Activated CD8-positive, alpha-beta T cell treated with anti-CD3 and anti-CD28 coated beads for 36 hours (primary cell): ENCODE measurements at regions of chr12 and their contacts with region 1.

Region 1: DNA sequence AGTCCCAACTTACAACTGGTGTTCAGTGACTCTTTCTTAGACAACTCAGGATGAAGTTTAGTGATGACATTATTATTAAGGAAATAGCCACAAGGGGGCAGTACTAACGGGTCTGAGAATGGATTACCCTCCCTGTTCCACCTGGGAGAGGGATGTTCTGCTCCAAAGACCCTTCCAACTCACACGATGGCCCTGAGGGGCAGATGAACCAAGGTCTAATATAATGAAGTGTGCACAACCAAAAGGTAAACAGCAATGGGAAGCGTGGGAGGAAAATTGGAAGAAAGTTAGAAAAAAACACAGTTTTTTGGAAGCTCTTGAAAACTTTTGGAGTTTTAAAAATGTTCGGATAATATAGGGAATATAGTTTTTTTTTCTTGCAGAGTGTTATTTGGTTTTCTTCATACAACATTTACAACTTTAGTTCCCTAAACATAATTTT is 24.0 kb downstream of the FGF6 start:
- DNase-seq: peak; percentile 28
- ATAC-seq: no peak
- H3K4me3 Mint-ChIP-seq: no peak overlapping the region
- H3K27ac Mint-ChIP-seq: no peak overlapping the region
- H3K4me1 Mint-ChIP-seq: no peaks in the 10 kb centered on the region
- H3K27me3 Mint-ChIP-seq: peaks cover 5% of the 10 kb centered on the region
- CTCF ChIP-seq: peak; percentile 89

Region 2: DNA sequence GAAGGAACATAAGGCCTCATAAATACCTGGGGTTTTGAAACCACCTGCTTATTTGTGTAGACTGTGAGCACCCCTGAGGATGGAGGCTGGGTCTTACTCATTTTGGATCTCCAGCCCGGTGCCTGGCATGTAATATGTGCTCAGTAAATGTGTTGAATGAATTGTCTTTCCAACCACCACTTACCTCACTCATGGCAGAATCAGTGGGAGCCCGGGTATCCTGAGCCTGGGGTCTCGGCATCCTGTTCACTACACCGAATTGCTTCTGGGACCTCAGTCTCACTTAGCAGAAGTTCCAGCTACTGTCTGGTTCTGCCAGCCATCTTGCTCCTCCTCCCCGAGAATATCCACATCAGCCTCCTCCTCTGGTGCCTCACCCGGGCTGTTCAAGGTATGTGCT is 191.1 kb before region 1 on chr12:
- CTCF ChIA-PET with region 1: no interaction called
- POLR2A ChIA-PET with region 1: no interaction called
- intact Hi-C with region 1: no loop called
- DNase-seq: no peak
- ATAC-seq: no peak
- H3K4me3 Mint-ChIP-seq: no peak overlapping the region
- H3K27ac Mint-ChIP-seq: no peak overlapping the region
- H3K4me1 Mint-ChIP-seq: no peaks in the 10 kb centered on the region
- H3K27me3 Mint-ChIP-seq: no peaks in the 10 kb centered on the region
- CTCF ChIP-seq: no peak

Region 3: DNA sequence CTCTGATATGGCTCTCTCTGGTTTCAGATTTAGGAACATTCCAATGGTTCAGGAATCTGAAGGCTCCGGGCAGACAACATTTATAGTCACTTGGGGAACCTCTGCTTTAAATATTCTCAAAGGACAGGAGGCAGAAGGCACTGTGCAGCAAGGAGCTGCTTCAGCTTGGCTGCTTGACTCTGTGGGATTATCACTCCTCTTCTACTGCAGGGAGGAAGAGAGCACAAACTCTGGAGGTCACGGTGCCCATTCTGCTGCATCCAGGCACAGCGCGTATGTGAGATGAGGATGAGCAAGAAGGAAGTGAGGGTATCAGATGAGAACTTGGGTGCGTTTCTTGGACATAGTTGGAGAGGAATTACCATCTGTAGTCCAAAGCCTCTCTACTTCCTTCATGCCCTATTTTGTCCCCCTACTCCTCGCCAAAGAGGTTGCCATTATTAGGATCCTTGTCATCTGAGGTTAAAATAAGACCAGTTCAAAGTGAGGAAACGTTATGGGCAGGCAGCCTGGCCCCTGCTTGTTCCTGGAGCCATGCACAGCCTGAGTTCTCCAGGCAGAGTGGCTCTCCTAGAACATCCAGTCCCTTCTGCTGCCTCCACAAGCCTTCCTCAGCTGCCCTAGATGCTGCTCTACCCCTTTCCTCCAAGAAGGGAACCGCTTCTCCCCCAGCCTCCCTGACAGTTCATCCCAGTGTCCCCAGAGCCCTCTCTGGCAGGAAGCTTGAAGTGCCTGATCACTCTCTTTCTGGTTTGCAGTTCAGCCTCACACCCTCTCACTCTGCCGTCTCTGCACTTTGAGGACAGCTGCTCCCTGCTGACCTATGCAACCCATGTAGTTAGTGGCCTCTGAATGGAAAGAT is 11.5 kb after region 1 on chr12:
- CTCF ChIA-PET with region 1: interaction called, 15 read pairs
- POLR2A ChIA-PET with region 1: no interaction called
- intact Hi-C with region 1: no loop called
- DNase-seq: no peak
- ATAC-seq: no peak
- H3K4me3 Mint-ChIP-seq: no peak overlapping the region
- H3K27ac Mint-ChIP-seq: no peak overlapping the region
- H3K4me1 Mint-ChIP-seq: no peaks in the 10 kb centered on the region
- H3K27me3 Mint-ChIP-seq: peaks cover 3% of the 10 kb centered on the region
- CTCF ChIP-seq: no peak

Region 4: GRCh38 chr12:4526923-4527546 is 105.4 kb after region 1 on chr12:
- CTCF ChIA-PET with region 1: interaction called, 26 read pairs
- POLR2A ChIA-PET with region 1: no interaction called
- intact Hi-C with region 1: loop called (anchors 2 kb)
- DNase-seq: no peak
- ATAC-seq: no peak
- H3K4me3 Mint-ChIP-seq: no peak overlapping the region
- H3K27ac Mint-ChIP-seq: no peak overlapping the region
- H3K4me1 Mint-ChIP-seq: peaks cover 3% of the 10 kb centered on the region
- H3K27me3 Mint-ChIP-seq: no peaks in the 10 kb centered on the region
- CTCF ChIP-seq: peak; percentile 83

Region 5: DNA sequence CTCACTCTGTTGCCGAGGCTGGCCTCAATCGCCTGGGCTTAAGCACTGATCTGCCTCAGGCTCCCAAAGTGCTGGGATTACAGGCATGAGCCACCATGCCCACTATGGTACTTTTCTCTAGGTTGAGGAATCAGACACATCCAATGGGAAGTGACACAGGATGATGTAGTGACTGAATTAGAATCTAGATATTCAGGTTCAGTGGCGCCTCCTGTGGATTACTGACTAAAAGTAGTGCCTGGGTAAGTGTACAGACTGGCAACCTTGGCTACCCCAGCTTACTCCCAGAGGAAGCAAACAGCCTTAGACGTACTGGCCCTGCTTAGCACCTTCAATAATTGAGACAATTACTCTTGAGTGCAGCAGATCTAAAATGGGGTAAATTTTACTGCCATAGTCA is 321.4 kb after region 1 on chr12:
- CTCF ChIA-PET with region 1: no interaction called
- POLR2A ChIA-PET with region 1: no interaction called
- intact Hi-C with region 1: no loop called
- DNase-seq: no peak
- ATAC-seq: no peak
- H3K4me3 Mint-ChIP-seq: no peak overlapping the region
- H3K27ac Mint-ChIP-seq: no peak overlapping the region
- H3K4me1 Mint-ChIP-seq: no peaks in the 10 kb centered on the region
- H3K27me3 Mint-ChIP-seq: no peaks in the 10 kb centered on the region
- CTCF ChIP-seq: no peak